HEK293T (cell line): ENCODE measurements at regions of chr5 and their contacts with region 1.

Region 1: GRCh38 chr5:136062366-136063274 is 33.8 kb downstream of the TGFBI start:
- DNase-seq: peak; percentile 49

Region 2: GRCh38 chr5:135890867-135891266 is 171.8 kb before region 1 on chr5:
- CTCF ChIA-PET with region 1: interaction called, 17 read pairs
- POLR2A ChIA-PET with region 1: no interaction called
- DNase-seq: no peak

Region 3: GRCh38 chr5:136006761-136007251 is 55.8 kb before region 1 on chr5:
- CTCF ChIA-PET with region 1: interaction called, 10 read pairs
- POLR2A ChIA-PET with region 1: no interaction called
- DNase-seq: no peak

Region 4: DNA sequence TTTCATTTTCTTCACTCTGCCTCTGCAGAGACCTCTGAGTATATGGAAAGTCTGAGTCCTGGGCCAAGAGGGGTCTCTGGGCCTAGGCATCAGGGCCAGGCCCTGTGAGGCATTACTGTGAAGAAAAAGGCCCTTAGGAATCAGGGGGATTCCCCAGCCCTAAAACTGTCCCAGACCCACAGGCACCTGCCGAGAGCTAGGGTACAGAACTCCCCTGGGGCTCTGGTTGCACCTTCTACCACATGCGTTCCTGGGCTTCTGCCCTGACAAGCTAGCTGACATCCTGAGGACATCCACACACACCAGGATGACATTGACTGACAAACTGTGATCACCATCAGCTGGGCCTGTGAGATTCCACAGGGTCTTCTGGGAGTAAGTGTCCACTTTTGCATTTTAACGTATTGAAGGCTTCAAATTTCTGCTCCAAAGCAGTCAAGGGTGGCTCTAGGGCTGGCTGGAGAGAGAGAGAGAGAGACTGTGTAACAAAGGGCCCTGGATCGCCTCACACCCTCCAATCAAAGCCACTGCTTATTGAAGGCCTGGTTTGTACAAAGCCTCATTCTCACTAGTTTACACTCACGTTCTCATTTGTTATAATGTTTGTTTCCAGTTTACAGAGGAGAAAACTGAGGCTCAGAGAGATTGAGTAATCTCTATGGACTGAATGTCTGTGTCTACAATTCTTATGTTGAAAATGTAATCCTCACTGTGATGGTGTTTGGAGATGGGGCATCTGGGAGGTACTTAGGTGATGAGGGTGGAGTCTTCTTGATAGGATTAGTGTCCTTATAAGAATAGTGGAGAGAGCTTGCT is 11.3 kb after region 1 on chr5:
- CTCF ChIA-PET with region 1: no interaction called
- POLR2A ChIA-PET with region 1: no interaction called
- DNase-seq: no peak

Region 5: DNA sequence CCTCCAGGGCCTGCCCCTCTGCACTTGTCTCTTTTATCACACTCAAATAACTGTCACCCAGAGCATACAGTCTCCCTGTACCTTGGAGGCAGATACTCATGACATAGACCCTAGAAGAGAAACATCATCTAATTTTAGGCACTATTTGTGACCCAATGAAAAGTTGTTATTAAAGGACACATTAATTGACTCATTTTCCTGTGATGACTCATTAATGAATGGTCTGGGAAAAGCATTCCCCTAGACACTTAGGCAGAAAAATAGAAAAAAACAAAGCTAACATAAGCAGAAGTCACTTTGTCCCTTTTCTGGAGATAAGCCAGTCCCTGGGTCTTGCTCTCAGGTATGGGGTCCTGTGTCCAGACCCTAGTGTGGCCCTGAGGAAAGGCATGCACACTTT is 287.7 kb after region 1 on chr5:
- CTCF ChIA-PET with region 1: no interaction called
- POLR2A ChIA-PET with region 1: no interaction called
- DNase-seq: no peak